ENCODE measurements at regions of chr20 and their contacts with region 1.

Region 1: GRCh38 chr20:35523298-35523888 is 6.1 kb downstream of the C20orf173 start:
- DNase-seq: peak in 8 of 14 experiments; percentile 8 to 41 (median 17)
- ATAC-seq: no peak
- H3K4me3 ChIP-seq: no peak overlapping the region
- H3K4me3 Mint-ChIP-seq: no peak overlapping the region
- H3K27ac ChIP-seq: no peak overlapping the region
- H3K27ac Mint-ChIP-seq: no peak overlapping the region
- H3K4me1 ChIP-seq: no peaks in the 10 kb centered on the region
- H3K4me1 Mint-ChIP-seq: no peaks in the 10 kb centered on the region
- H3K27me3 ChIP-seq: no peaks in the 10 kb centered on the region
- H3K27me3 Mint-ChIP-seq: no peaks in the 10 kb centered on the region
- CTCF ChIP-seq: peak; percentile 35

Region 2: GRCh38 chr20:35472209-35472608 is 51.2 kb before region 1 on chr20:
- CTCF ChIA-PET with region 1: no interaction called
- POLR2A ChIA-PET with region 1: no interaction called
- intact Hi-C with region 1: loop called in 1 of 2 experiments (anchors 5 kb)
- DNase-seq: no peak
- ATAC-seq: no peak
- H3K4me3 ChIP-seq: no peak overlapping the region
- H3K4me3 Mint-ChIP-seq: no peak overlapping the region
- H3K27ac ChIP-seq: no peak overlapping the region
- H3K27ac Mint-ChIP-seq: peak overlapping the region; percentile 54
- H3K4me1 ChIP-seq: no peaks in the 10 kb centered on the region
- H3K4me1 Mint-ChIP-seq: no peaks in the 10 kb centered on the region
- H3K27me3 ChIP-seq: no peaks in the 10 kb centered on the region
- H3K27me3 Mint-ChIP-seq: no peaks in the 10 kb centered on the region
- CTCF ChIP-seq: no peak

Region 3: DNA sequence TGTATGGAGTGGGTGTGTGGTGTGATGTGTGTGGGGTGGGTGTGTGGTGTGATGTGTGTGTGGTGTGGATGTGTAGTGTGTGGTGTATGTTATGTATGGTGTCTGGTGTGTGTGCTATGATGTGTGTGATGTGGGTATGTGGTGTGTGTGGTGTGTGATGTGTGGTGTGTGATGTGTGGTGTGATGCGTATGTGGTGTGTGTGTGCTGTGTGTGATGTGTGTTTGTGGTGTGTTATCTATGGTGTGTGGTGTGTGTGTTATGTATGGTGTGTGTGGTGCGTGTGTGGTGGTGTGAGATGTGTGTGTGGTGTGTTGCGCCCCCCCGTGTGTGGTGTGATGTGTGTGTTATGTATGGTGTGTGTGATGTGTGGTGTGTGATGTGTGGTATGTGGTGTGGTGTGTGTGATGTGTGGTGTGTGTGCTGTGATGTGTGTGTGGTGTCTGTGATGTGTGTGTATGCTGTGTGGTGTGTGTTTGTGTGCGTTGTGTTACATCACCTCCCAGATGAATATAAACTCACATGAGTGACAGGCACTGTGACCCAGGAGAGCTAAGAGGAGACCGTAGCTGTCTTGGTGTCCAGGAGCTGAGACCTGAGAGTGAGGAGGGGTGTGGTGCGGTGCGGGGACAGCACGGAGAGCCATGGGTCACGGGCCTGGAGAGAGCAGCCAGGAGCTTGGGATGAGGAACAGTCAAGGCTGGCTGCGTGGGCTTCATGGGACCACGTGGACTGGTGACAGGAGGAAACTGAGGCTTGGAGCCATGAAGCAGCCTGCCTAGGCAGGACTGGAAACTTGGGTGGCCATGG is 791.5 kb after region 1 on chr20:
- CTCF ChIA-PET with region 1: no interaction called
- POLR2A ChIA-PET with region 1: no interaction called
- intact Hi-C with region 1: no loop called
- DNase-seq: peak in 1 of 14 experiments; percentile 24
- ATAC-seq: no peak
- H3K4me3 ChIP-seq: no peak overlapping the region
- H3K4me3 Mint-ChIP-seq: no peak overlapping the region
- H3K27ac ChIP-seq: no peak overlapping the region
- H3K27ac Mint-ChIP-seq: no peak overlapping the region
- H3K4me1 ChIP-seq: no peaks in the 10 kb centered on the region
- H3K4me1 Mint-ChIP-seq: no peaks in the 10 kb centered on the region
- H3K27me3 ChIP-seq: peaks cover 7 to 20% of the 10 kb centered on the region in 2 experiments
- H3K27me3 Mint-ChIP-seq: peaks cover 31% of the 10 kb centered on the region
- CTCF ChIP-seq: no peak

Measured in CD4-positive, alpha-beta T cell (primary cell).